ENCODE measurements at regions of chr2 and their contacts with region 1.

Region 1: GRCh38 chr2:100381240-100381639 is 36.2 kb downstream of the CHST10 start:
- DNase-seq: peak; percentile 70
- ATAC-seq: peak; percentile 92
- H3K4me3 ChIP-seq: no peak overlapping the region
- H3K27ac ChIP-seq: no peak overlapping the region
- H3K4me1 ChIP-seq: peaks cover 4% of the 10 kb centered on the region
- H3K27me3 ChIP-seq: no peaks in the 10 kb centered on the region
- CTCF ChIP-seq: peak; percentile 87

Region 2: GRCh38 chr2:100262555-100263320 is 118.5 kb before region 1 on chr2:
- intact Hi-C with region 1: loop called (anchors 10 kb)
- DNase-seq: peak; percentile 83
- ATAC-seq: peak; percentile 85
- H3K4me3 ChIP-seq: no peak overlapping the region
- H3K27ac ChIP-seq: no peak overlapping the region
- H3K4me1 ChIP-seq: no peaks in the 10 kb centered on the region
- H3K27me3 ChIP-seq: no peaks in the 10 kb centered on the region
- CTCF ChIP-seq: peak; percentile 99

Measured in upper lobe of right lung (tissue), 1 donor.